Activated CD4-positive, alpha-beta T cell treated with anti-CD3 and anti-CD28 coated beads, Interleukin-2, amount 10 ng/mL, durations not matched to agents 7 days and 5 days (primary cell): ENCODE measurements at regions of chr1 and their contacts with region 1.

Region 1: GRCh38 chr1:150578965-150579798 is at the start of gene MCL1:
- DNase-seq: peak; percentile 93
- H3K4me3 Mint-ChIP-seq: peak within 1 kb of the TSS; percentile 99
- H3K27ac Mint-ChIP-seq: peak within 1 kb of the TSS; percentile 98
- H3K4me1 Mint-ChIP-seq: peaks cover 25% of the 10 kb centered on the region
- H3K27me3 Mint-ChIP-seq: no peaks in the 10 kb centered on the region
- total RNA-seq, gene MCL1: 260 to 311 TPM

Region 2: DNA sequence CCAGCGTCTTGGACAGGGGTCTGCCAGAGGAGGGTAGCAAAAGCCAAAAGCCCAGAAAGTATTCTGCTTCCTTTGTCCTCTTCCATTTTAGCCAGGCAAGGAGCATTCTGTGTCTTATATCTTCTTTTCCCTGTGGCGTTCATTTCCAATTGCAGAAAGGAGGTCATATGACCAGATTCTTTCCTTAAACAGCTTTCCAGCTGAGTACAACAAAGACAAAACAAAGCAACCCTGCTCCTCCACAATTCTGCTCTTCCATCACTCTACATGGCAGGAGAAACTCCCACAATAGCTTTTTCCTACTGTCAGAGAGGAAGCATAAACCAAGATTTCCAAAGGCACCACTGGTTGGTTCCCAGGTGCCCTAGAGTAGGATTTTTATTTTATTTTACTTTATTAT is 30.6 kb after region 1 on chr1:
- CTCF ChIA-PET with region 1: interaction called, 10 read pairs
- POLR2A ChIA-PET with region 1: interaction called, 6 read pairs
- DNase-seq: no peak
- H3K4me3 Mint-ChIP-seq: no peak overlapping the region
- H3K27ac Mint-ChIP-seq: no peak overlapping the region
- H3K4me1 Mint-ChIP-seq: peaks cover 39% of the 10 kb centered on the region
- H3K27me3 Mint-ChIP-seq: no peaks in the 10 kb centered on the region